CD8-positive, alpha-beta T cell (primary cell): ENCODE measurements at regions of chr9 and their contacts with region 1.

Region 1: DNA sequence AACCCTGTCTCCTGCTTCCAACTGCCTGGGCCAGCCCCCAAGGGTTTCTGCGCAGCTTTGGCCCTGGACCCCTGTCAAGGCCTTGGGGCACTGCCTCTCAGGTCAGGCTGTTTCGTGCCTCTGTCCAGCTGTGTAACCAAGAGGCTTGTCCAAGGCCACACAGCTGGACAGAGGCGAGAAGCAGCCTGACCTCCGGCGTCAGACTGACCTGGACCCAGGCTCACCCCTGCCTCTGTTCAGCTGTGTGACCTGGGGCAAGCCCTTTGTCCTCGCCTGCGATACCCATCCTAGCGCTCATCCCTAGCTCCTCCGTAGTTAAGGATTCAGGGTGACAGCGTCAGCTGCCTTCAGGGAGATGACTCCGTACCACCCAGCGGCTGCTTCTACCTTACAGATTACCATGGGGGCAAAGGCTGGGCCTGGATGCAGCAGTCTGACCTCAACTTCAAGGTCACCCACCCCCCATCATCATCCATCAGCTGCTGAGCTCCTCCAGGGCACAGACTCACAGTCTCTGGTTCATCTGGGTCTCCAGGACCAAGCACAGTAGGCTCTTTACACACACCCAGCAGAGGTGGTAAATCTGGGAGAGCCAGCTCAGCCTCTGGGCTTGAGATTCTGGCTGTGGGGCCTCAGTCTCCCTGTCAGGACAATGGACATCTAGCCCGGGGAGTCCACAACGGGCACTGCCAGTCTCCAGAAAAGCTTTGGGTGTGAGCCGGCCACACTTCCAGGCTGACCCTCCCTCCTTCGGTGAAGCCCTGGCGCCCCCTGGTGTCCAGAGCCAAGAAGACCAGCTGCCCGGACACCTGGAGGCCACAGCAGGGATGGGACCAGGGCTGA is 7.9 kb downstream of the AK1 start:
- DNase-seq: peak; percentile 51 to 89 (median 81)
- ATAC-seq: peak; percentile 71
- H3K4me3 ChIP-seq: no peak overlapping the region
- H3K4me3 Mint-ChIP-seq: no peak overlapping the region
- H3K27ac ChIP-seq: no peak overlapping the region
- H3K27ac Mint-ChIP-seq: no peak overlapping the region
- H3K4me1 ChIP-seq: peaks cover 17% of the 10 kb centered on the region
- H3K4me1 Mint-ChIP-seq: peaks cover 17% of the 10 kb centered on the region
- H3K27me3 ChIP-seq: no peaks in the 10 kb centered on the region
- H3K27me3 Mint-ChIP-seq: no peaks in the 10 kb centered on the region
- CTCF ChIP-seq: peak; percentile 74

Region 2: DNA sequence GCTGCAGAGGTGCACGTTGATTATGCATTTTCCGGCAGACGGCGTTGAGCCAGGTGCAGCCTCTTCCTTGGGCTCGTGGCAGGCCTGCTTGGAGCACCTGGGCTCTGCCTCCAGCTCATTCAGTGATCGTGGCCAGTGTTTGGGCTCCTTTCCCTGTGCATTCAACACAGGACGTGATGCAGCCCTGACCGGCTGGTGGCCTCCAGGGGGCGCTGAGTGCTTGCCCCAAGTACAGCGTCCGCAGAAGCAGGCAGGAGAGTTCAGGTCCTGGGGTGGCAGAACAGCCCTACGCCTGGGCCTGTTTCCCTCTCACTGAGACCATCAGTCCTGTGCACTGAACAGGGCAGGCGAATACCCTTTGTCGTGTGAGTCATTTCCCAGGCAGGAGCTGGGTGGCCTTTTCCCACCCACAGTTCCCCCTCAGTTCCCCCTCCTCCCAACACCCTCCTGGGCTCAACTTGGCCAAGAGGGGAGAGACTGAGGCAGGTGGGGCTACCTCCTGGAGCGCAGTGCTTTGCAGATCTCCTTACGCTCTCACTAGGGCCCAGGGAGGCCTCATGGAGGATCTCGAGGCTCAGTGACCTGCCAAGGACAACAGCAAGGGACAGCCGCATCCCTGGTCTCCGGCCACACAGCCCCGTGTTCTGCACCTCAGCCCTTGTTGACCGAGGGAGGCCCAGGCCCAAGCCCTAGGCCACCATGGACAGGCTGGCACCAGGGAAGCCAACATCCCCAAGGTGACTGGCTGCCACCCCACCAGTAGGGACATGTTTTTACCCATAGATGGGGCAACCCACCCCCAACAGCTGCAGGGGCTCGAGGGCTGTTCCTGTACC is 365.4 kb before region 1 on chr9:
- CTCF ChIA-PET with region 1: interaction called, 3 read pairs
- POLR2A ChIA-PET with region 1: no interaction called
- intact Hi-C with region 1: loop called in 1 of 2 experiments (anchors 5 kb)
- DNase-seq: peak; percentile 57 to 89 (median 82)
- ATAC-seq: peak; percentile 93
- H3K4me3 ChIP-seq: no peak overlapping the region
- H3K4me3 Mint-ChIP-seq: no peak overlapping the region
- H3K27ac ChIP-seq: no peak overlapping the region
- H3K27ac Mint-ChIP-seq: no peak overlapping the region
- H3K4me1 ChIP-seq: no peaks in the 10 kb centered on the region
- H3K4me1 Mint-ChIP-seq: no peaks in the 10 kb centered on the region
- H3K27me3 ChIP-seq: no peaks in the 10 kb centered on the region
- H3K27me3 Mint-ChIP-seq: no peaks in the 10 kb centered on the region
- CTCF ChIP-seq: peak; percentile 66

Region 3: GRCh38 chr9:127763918-127764384 is 105.6 kb before region 1 on chr9:
- CTCF ChIA-PET with region 1: interaction called, 12 read pairs
- POLR2A ChIA-PET with region 1: interaction called, 3 read pairs
- intact Hi-C with region 1: no loop called
- DNase-seq: peak in 4 of 9 experiments; percentile 35 to 61 (median 48)
- ATAC-seq: no peak
- H3K4me3 ChIP-seq: no peak overlapping the region
- H3K4me3 Mint-ChIP-seq: no peak overlapping the region
- H3K27ac ChIP-seq: peak overlapping the region in 1 of 2 experiments; percentile 8
- H3K27ac Mint-ChIP-seq: peak overlapping the region; percentile 82
- H3K4me1 ChIP-seq: peaks cover 50% of the 10 kb centered on the region
- H3K4me1 Mint-ChIP-seq: peaks cover 60% of the 10 kb centered on the region
- H3K27me3 ChIP-seq: no peaks in the 10 kb centered on the region
- H3K27me3 Mint-ChIP-seq: no peaks in the 10 kb centered on the region
- CTCF ChIP-seq: peak; percentile 28

Region 4: DNA sequence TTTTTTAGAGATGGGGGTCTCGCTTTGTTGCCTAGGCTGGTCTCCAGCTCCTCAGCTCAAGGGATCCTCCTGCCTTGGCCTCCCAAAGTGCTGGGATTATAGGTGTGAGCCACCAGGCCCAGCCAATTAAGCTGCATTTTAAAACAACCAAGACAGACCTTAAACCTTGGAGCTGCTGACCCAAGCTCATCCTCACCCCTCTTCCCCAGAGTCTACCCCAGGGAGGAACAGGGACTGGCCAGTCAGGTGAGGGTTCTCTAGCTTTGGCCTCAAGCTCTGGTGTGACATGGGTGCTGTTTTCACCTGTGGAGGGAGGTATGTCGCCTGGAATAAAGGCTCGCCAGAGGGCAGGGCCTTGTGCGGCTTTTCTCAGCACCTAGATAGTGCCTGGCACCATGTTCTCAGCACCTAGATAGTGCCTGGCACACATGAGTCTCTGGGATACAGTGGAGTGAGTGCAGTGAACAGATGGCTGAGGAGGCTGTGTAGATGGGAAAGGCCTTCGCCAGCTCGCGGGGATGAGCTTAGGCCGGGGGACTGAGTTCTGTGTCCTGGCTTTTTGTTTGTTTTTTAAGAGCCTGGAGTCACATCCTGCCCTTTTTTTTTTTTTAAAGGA is 76.3 kb before region 1 on chr9:
- CTCF ChIA-PET with region 1: interaction called, 85 read pairs
- POLR2A ChIA-PET with region 1: interaction called, 6 read pairs
- intact Hi-C with region 1: no loop called
- DNase-seq: no peak
- ATAC-seq: no peak
- H3K4me3 ChIP-seq: no peak overlapping the region
- H3K4me3 Mint-ChIP-seq: no peak overlapping the region
- H3K27ac ChIP-seq: no peak overlapping the region
- H3K27ac Mint-ChIP-seq: no peak overlapping the region
- H3K4me1 ChIP-seq: peaks cover 26% of the 10 kb centered on the region
- H3K4me1 Mint-ChIP-seq: peaks cover 33% of the 10 kb centered on the region
- H3K27me3 ChIP-seq: no peaks in the 10 kb centered on the region
- H3K27me3 Mint-ChIP-seq: no peaks in the 10 kb centered on the region
- CTCF ChIP-seq: no peak

Region 5: DNA sequence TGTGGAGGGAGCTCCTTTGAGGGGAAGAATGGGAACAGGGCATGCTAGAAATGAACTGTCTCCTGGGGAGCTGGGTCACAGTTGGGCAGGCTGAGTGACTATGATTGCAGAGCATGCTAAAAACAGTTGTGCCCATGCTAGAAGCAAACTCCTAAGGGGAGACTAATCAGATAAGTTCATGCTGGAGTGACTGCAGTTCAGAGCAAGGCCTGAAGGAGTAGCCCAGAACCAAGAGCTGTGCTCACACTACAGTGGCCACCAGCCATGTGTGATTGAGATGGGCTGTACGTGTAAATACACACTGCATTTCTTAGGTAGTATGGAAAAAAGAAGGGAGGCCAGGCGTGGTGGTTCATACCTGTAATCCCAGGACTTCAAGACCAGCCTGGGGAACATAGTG is 18.3 kb after region 1 on chr9:
- CTCF ChIA-PET with region 1: interaction called, 20 read pairs
- POLR2A ChIA-PET with region 1: no interaction called
- intact Hi-C with region 1: no loop called
- DNase-seq: no peak
- ATAC-seq: peak; percentile 64
- H3K4me3 ChIP-seq: no peak overlapping the region
- H3K4me3 Mint-ChIP-seq: no peak overlapping the region
- H3K27ac ChIP-seq: no peak overlapping the region
- H3K27ac Mint-ChIP-seq: no peak overlapping the region
- H3K4me1 ChIP-seq: no peaks in the 10 kb centered on the region
- H3K4me1 Mint-ChIP-seq: peaks cover 5% of the 10 kb centered on the region
- H3K27me3 ChIP-seq: no peaks in the 10 kb centered on the region
- H3K27me3 Mint-ChIP-seq: no peaks in the 10 kb centered on the region
- CTCF ChIP-seq: no peak

Region 6: GRCh38 chr9:127930231-127931091 is 60.9 kb after region 1 on chr9 and contains the start of gene PIP5KL1:
- CTCF ChIA-PET with region 1: interaction called, 10 read pairs
- POLR2A ChIA-PET with region 1: no interaction called
- intact Hi-C with region 1: no loop called
- DNase-seq: peak; percentile 45 to 83 (median 68)
- ATAC-seq: peak; percentile 60
- H3K4me3 ChIP-seq: peak within 1 kb of the TSS; percentile 40 to 53
- H3K4me3 Mint-ChIP-seq: peak within 1 kb of the TSS; percentile 69
- H3K27ac ChIP-seq: no peak within 1 kb of the TSS
- H3K27ac Mint-ChIP-seq: peak within 1 kb of the TSS; percentile 71
- H3K4me1 ChIP-seq: peaks cover 36% of the 10 kb centered on the region
- H3K4me1 Mint-ChIP-seq: peaks cover 35% of the 10 kb centered on the region
- H3K27me3 ChIP-seq: peaks cover 0 to 5% of the 10 kb centered on the region in 2 experiments
- H3K27me3 Mint-ChIP-seq: no peaks in the 10 kb centered on the region
- CTCF ChIP-seq: no peak
- total RNA-seq, gene PIP5KL1: 5.1 to 7.4 TPM